ENCODE measurements at regions of chr5 and their contacts with region 1.

Region 1: GRCh38 chr5:148457183-148457620 is 73.4 kb downstream of the FBXO38 start:
- DNase-seq: peak; percentile 12
- ATAC-seq: peak; percentile 49
- H3K4me3 Mint-ChIP-seq: no peak overlapping the region
- H3K27ac Mint-ChIP-seq: no peak overlapping the region
- H3K4me1 Mint-ChIP-seq: peaks cover 3% of the 10 kb centered on the region
- H3K27me3 Mint-ChIP-seq: peaks cover 20% of the 10 kb centered on the region

Region 2: DNA sequence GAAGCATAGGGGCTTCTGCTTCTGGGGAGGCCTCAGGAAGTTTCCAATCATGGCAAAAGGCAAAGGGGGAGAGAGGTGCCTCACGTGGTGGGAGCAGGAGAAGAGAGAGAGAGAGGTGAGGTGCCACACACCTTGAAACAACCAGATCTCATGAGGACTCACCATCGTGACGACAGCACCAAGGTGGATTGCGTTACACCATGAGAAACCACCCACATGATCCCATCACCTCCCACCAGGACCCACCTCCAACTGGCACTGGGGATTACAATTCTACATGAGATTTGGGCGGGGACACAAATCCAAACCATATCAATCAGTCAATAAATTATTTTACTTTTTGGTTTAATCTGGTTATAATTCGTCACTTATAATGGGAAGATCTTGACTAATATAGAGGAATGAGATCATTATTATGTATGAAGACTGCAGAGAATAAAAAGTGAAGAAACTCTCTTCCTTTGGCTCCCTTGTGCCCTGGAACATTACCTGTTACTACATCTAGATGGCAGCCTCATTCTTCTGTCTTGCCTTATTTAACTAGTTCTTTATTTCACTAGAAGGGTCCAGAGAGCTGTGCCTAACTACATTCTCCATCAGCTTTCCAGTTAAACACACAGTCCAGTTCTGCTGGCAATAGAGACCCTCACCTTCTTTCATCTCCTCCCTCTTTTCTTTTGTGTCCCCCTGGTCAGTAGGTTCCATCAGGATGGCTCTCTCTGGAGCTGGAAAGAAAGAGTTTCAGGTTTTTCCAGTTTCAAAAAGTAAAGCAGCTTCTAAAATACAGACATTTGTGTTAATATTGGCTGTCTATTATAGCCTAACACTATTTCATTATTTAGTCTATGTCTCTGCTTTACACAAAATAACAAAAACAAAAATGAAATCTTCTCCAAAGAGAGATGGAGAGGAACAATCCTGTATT is 166.7 kb before region 1 on chr5:
- CTCF ChIA-PET with region 1: no interaction called
- POLR2A ChIA-PET with region 1: no interaction called
- intact Hi-C with region 1: loop called in 1 of 2 experiments (anchors 5 kb)
- DNase-seq: no peak
- ATAC-seq: no peak
- H3K4me3 Mint-ChIP-seq: no peak overlapping the region
- H3K27ac Mint-ChIP-seq: no peak overlapping the region
- H3K4me1 Mint-ChIP-seq: no peaks in the 10 kb centered on the region
- H3K27me3 Mint-ChIP-seq: peaks cover 6% of the 10 kb centered on the region

Region 3: DNA sequence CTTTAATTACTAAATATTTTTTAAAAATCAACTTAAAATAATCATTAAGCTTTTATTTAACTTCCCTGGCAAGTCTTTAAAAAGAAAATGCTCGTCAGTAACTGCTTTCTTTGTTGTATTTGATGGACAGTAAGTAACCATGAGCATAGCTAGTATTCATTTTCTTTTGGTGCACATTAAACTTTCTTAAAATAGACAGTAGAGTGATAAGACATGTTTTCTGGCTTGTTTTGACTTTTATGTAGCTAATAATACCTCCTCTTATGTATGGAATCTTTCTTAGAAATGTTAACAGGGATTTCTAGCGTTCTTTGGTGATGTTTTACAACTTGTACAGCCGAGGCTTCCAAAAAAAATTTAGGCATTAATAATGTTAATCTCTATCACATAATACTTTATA is 50.8 kb before region 1 on chr5:
- CTCF ChIA-PET with region 1: no interaction called
- POLR2A ChIA-PET with region 1: no interaction called
- intact Hi-C with region 1: no loop called
- DNase-seq: no peak
- ATAC-seq: no peak
- H3K4me3 Mint-ChIP-seq: no peak overlapping the region
- H3K27ac Mint-ChIP-seq: no peak overlapping the region
- H3K4me1 Mint-ChIP-seq: peaks cover 22% of the 10 kb centered on the region
- H3K27me3 Mint-ChIP-seq: no peaks in the 10 kb centered on the region

Measured in activated CD4-positive, alpha-beta T cell treated with anti-CD3 and anti-CD28 coated beads for 36 hours (primary cell).